Mammary epithelial cell (primary cell): ENCODE measurements at regions of chr3 and their contacts with region 1.

Region 1: DNA sequence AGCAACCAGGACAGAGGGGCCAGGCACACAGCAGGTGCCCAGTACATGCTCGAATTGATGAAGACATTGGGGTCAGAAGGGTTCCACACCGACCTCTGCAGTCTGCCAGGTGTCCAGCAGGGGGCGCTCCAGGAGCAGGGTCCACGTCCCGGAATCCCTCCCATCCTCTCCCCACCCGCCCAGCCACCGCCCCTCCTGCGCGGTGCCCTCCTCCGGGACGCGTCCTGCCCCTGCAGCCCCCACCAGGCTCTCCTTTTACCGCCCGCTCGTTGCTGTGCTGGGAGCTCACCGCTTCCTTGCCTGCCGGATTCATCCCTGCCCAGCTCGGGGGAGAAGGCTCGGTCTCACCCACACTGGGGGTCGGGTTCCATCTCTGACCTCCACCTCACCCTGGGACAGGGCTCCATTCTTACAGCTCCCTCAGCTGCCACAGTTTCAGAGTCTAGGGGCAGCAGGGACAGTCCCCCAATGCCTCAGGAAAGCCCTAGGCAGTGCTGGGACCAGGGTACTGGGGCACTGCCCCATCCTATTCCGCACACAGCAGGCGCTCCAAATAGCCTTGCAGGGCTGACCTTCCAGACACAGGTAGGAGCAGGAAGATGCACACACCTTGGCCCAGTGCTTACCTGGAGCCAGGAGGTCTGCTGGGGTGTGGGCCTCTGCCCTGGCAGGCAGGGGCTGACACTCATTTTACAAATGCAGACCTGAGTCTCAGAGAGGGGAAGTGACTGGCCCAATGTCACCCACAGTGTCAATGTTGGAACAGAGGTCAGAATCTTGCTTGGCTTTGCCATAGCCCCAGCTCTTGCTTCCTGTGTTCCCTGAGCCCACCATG is 31.0 kb downstream of the GRIP2 start:
- DNase-seq: no peak
- H3K4me3 ChIP-seq: peak overlapping the region in 1 of 3 experiments; percentile 11
- H3K27ac ChIP-seq: no peak overlapping the region
- H3K4me1 ChIP-seq: peaks cover 2% of the 10 kb centered on the region
- H3K27me3 ChIP-seq: no peaks in the 10 kb centered on the region
- CTCF ChIP-seq: peak; percentile 67 to 86

Region 2: DNA sequence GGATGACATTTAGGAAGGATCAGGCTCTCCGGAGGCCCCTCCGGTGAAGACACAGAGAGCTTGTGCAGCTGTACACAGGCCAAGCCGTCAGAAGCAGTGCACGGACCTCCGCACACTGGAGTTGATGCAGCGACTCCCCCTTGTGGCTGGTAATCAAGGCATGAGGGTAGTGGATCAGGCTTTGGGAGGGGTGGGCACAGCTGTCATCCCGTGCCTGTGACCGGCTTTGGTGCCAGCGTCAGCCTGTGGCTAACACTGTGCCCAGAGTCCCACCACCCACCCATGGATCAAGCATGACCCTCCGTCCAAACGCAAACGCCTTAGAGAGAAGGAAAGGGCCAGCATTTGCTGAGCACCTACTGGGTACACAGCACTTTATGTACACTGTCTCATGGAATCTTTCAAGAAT is 39.1 kb after region 1 on chr3:
- CTCF ChIA-PET with region 1: no interaction called
- dilution Hi-C with region 1: no loop called
- in situ Hi-C with region 1: no loop called
- intact Hi-C with region 1: loop called (anchors 1 kb)
- DNase-seq: peak; percentile 20
- H3K4me3 ChIP-seq: no peak overlapping the region
- H3K27ac ChIP-seq: no peak overlapping the region
- H3K4me1 ChIP-seq: peaks cover 9% of the 10 kb centered on the region
- H3K27me3 ChIP-seq: peaks cover under 1% of the 10 kb centered on the region
- CTCF ChIP-seq: peak; percentile 58 to 73

Region 3: DNA sequence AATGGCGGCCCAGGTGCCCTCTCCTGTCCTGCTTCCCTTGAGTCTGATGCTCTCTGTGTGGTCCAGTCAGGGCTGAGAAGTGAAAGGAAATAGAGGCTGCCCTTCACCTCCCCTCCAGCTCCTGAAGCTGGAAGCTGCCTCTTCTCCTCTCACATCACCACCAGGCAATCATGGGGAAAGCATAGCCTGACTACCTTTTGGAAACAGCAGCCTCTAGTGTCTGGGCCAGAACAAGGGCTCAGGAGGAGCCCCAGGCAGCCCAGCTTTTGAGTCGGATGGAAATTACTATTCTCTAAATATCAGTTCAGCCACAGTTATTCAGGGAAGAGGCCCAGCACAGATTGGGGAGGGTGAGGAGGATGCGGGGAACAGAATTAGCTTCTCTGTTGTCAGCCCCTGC is 99.1 kb after region 1 on chr3:
- CTCF ChIA-PET with region 1: no interaction called
- dilution Hi-C with region 1: no loop called
- in situ Hi-C with region 1: no loop called
- intact Hi-C with region 1: loop called (anchors 2 kb)
- DNase-seq: no peak
- H3K4me3 ChIP-seq: no peak overlapping the region
- H3K27ac ChIP-seq: no peak overlapping the region
- H3K4me1 ChIP-seq: peaks cover 5% of the 10 kb centered on the region
- H3K27me3 ChIP-seq: peaks cover 7% of the 10 kb centered on the region
- CTCF ChIP-seq: peak in 1 of 2 donors; percentile 46

Region 4: GRCh38 chr3:14633819-14634424 is 124.7 kb after region 1 on chr3:
- CTCF ChIA-PET with region 1: no interaction called
- dilution Hi-C with region 1: no loop called
- in situ Hi-C with region 1: no loop called
- intact Hi-C with region 1: loop called (anchors 1 kb)
- DNase-seq: peak; percentile 41
- H3K4me3 ChIP-seq: no peak overlapping the region
- H3K27ac ChIP-seq: no peak overlapping the region
- H3K4me1 ChIP-seq: peaks cover 4% of the 10 kb centered on the region
- H3K27me3 ChIP-seq: no peaks in the 10 kb centered on the region
- CTCF ChIP-seq: peak; percentile 72 to 82

Region 5: DNA sequence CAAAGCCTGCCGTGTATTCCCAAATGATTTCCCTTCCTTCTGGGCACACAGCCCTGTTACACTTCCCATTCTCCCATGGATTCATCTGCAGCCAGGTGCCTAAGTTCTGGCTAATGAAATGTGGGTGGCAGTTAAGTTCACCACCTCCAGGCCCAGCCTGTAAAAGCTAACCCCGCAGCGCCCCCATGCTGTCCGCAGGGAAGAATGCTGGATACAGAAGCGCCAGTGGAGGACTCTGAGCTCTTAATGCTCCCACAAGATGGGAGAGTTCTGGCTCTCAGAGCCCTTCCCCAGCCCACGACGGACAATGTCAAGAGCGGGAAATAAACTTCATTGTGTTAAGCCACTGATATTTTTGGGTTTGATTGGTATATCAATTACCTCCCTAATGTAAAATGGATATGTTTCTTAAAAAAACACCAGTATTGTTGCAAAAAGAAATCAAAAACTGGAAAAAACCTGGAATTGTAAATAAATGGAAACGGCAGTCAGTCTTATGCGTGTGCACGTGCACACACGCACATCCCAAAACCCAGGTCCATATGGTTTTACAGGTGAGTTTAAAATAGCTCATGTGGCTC is 271.8 kb after region 1 on chr3:
- CTCF ChIA-PET with region 1: no interaction called
- dilution Hi-C with region 1: no loop called
- in situ Hi-C with region 1: no loop called
- intact Hi-C with region 1: loop called (anchors 1 kb)
- DNase-seq: peak; percentile 39
- H3K4me3 ChIP-seq: no peak overlapping the region
- H3K27ac ChIP-seq: no peak overlapping the region
- H3K4me1 ChIP-seq: no peaks in the 10 kb centered on the region
- H3K27me3 ChIP-seq: no peaks in the 10 kb centered on the region
- CTCF ChIP-seq: peak; percentile 43 to 65